Adrenal gland (tissue), 19 donors: ENCODE measurements at regions of chr6 and their contacts with region 1.

Region 1: DNA sequence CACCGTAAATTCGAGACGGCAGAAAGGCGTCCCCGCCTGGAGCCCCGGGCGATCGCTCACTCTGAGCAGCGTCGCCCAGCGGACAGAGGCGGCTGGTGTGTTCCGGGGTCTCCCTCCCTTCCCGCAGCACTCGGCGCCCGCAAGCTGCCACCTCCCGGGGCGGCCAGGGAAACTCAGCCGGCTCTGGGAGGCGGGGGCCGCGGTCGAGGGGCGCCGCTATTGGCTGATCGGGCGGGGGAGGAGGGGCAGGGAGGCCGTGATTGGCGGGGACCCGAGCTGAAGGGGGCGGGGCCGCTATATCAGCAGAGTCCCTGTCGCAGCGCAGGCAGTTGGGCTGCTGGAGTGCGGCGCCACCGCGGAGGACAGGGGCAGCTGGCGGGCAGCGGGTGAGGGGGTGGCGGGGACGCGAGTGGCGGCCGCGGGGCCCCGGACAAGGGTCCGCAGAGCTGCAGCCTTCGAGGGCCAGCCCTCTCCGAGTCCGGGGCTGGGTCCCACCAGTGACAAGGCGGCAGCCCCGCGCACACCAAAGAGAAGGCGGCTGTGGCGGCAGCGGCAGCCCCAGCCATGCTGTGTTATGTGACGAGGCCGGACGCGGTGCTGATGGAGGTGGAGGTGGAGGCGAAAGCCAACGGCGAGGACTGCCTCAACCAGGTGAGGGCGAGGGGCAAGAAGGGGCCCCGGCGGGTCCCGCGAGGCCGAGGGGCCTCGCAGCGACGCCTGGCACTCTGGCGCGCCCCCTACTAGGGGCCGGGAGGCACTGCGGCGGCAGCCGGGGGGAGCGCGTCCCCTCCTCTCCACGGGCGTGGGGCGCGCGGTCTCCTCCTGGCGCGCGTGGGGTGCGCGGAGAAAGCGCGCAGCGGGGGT is at the start of gene MYLIP:
- DNase-seq: peak; percentile 98 to 99 (median 99)
- H3K4me3 ChIP-seq: peak within 1 kb of the TSS; percentile 74 to 99 (median 86)
- H3K27ac ChIP-seq: peak within 1 kb of the TSS; percentile 42 to 95 (median 92)
- H3K4me1 ChIP-seq: peaks cover 16 to 29% of the 10 kb centered on the region in 2 donors
- H3K27me3 ChIP-seq: no peaks in the 10 kb centered on the region
- CTCF ChIP-seq: peak; percentile 35 to 89 (median 72)
- POLR2A ChIP-seq: peak; percentile 99 to 100
- total RNA-seq, gene MYLIP: 8.6 to 49.2 (median 37.6) TPM

Region 2: GRCh38 chr6:15691250-15691869 is 437.6 kb before region 1 on chr6:
- intact Hi-C with region 1: loop called in 1 of 2 experiments (anchors 5 kb)
- DNase-seq: peak; percentile 82 to 93 (median 87)
- H3K4me3 ChIP-seq: peak overlapping the region in 2 of 4 donors; percentile 15 to 39
- H3K27ac ChIP-seq: no peak overlapping the region
- H3K4me1 ChIP-seq: peaks cover 0 to 7% of the 10 kb centered on the region in 2 donors
- H3K27me3 ChIP-seq: no peaks in the 10 kb centered on the region
- CTCF ChIP-seq: peak; percentile 99 to 100 (median 100)
- POLR2A ChIP-seq: no peak

Region 3: GRCh38 chr6:16670183-16670582 is 541.2 kb after region 1 on chr6:
- intact Hi-C with region 1: no loop called
- DNase-seq: peak in 4 of 7 donors; percentile 26 to 64 (median 40)
- H3K4me3 ChIP-seq: no peak overlapping the region
- H3K27ac ChIP-seq: peak overlapping the region in 2 of 5 donors; percentile 4 to 65
- H3K4me1 ChIP-seq: peaks cover 0 to 32% of the 10 kb centered on the region in 2 donors
- H3K27me3 ChIP-seq: no peaks in the 10 kb centered on the region
- CTCF ChIP-seq: no peak
- POLR2A ChIP-seq: no peak